Ascending aorta (tissue), 2 donors: ENCODE measurements at regions of chr14 and their contacts with region 1.

Region 1: DNA sequence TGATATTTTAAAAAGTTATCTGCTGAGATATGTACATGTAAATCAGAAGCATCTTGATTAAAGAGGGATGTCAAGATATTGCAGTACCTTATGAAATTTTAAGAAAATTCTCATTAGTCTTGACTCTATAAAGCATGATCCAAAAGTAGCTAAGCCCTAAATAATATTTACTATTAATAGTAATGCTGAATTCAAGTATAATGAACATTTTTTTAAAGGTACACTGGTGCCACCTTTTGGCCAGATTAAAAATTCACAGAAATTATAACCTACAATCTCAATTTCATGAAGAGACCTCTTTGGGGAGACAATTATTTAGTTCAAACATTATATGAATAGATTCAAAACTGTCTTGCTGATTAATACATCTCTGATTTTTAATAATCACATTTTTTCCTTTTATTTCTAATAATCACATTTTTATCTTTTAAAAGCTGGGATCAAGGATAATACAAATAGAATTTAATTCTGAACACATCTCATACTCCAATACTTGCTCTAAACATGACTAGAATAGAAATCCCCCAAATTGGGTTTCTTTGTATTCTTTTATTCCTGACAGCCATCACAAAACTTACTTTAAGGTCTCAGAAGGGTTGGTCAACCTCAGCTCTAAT is 13.4 kb downstream of the AKAP5 start:
- DNase-seq: no peak
- H3K4me3 ChIP-seq: no peak overlapping the region
- H3K27ac ChIP-seq: peak overlapping the region in 1 of 2 donors; percentile 18
- H3K4me1 ChIP-seq: no peaks in the 10 kb centered on the region
- H3K27me3 ChIP-seq: no peaks in the 10 kb centered on the region
- CTCF ChIP-seq: peak in 2 of 3 experiments; percentile 48 to 63

Region 2: DNA sequence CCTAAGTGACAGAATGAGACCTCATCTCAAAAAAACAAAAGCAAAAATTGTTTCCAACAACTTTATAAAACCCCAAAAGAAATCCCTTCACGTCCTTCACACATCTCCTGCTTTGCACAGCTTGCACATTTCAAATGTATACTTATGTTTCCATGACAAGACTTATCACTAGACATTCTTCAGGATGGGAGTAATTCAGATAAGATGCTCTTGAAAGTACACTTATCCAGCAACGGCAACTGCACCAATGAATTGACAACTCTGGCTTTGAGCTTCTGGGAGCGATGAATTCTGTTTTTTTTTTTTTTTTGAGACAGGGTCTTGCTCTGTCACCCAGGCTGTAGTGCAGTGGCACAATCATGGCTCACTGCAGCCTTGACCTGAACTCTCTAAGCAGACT is 44.2 kb before region 1 on chr14:
- intact Hi-C with region 1: loop called (anchors 1 kb)
- DNase-seq: no peak
- H3K4me3 ChIP-seq: no peak overlapping the region
- H3K27ac ChIP-seq: no peak overlapping the region
- H3K4me1 ChIP-seq: peaks cover 3 to 10% of the 10 kb centered on the region in 2 donors
- H3K27me3 ChIP-seq: no peaks in the 10 kb centered on the region
- CTCF ChIP-seq: no peak